ENCODE measurements at regions of chr10 and their contacts with region 1.

Region 1: DNA sequence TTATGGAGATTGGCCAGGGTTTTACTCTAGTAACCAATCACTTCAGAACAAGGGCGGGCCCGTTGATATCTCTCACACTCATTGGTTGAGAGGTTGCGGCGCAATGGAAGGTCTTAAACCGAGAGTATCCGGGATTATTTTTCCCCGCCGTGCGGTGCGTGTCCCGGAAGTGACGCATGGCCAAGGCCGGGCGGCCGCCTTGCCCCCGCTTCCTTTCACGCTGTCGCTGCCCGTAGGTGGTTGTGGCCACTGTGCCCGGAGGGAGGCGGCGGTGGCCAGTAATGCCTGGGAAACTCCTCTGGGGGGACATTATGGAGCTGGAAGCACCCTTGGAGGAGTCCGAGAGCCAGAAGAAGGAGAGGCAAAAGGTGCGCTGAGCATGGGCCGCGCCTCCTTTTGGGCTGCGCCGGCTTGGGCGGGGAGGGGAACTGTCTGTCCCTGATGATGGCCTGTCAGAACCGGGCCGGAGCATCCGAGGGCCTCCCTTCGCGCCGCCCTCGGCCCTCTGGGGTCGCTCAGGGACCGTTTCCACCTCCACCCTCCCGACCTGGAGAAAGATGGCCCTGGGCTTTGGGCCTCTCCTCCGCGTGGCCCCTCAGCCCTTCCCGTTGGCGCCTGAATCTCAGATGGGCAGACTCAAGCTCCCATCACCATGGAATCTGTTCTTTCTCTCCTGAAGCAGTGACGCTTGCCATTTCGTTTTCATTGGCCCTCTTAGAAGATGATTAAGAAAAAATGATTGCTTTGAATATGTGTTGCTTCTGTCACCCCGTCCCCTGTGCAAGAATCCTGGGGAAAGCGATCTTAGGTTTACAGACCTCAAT is at the start of gene DDX50:
- DNase-seq: peak; percentile 94 to 99
- H3K4me3 ChIP-seq: peak within 1 kb of the TSS; percentile 87 to 96
- H3K27ac ChIP-seq: peak within 1 kb of the TSS; percentile 93 to 100
- H3K4me1 ChIP-seq: peaks cover 2 to 16% of the 10 kb centered on the region in 2 donors
- H3K27me3 ChIP-seq: no peaks in the 10 kb centered on the region
- CTCF ChIP-seq: peak in 2 of 3 experiments; percentile 12
- total RNA-seq, gene DDX50: 40.7 TPM

Region 2: GRCh38 chr10:67849331-67850011 is 1051.8 kb before region 1 on chr10:
- intact Hi-C with region 1: loop called (anchors 10 kb)
- DNase-seq: peak; percentile 78 to 98
- H3K4me3 ChIP-seq: peak overlapping the region; percentile 77 to 87
- H3K27ac ChIP-seq: peak overlapping the region; percentile 92 to 94
- H3K4me1 ChIP-seq: peaks cover 3 to 5% of the 10 kb centered on the region in 2 donors
- H3K27me3 ChIP-seq: no peaks in the 10 kb centered on the region
- CTCF ChIP-seq: no peak

Region 3: DNA sequence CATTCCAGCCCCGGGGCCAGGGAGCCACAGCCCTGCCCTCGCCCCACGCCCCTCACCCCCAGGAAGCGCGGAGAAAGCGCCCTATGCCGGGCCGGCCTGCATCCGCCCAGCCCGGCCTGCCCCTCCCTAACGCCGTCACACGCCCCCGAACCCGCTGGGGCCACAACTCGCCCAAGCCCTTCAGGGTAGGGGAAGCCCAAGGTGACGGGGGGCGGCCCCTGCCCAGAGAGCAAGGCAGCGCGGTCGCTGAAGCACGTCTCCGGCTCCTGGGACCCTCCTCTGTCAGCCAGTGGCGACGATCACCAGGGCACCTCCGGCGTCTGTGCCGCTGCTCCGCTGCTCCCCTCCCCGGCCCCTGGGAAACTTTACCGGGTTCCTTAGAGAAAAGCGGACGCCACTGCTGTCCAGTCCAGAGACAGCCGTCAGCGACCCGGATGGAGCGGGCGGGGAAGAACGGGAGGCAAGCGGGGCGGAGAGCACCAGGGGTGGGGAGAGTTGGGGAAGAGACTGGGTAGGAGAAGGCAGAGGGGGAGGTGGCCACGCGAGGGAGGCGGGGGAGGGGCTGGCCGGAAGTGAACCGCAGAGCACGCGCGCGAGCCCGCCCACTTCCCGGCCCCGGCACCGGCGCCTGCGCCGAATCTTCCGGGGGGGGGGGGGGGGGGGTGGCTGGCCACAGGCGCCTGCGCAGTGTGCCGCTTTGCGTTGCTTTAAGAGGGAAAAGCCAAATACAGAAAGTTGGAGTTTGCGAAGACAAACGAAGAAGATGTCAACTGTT is 826.4 kb before region 1 on chr10 and contains the start of gene HERC4:
- intact Hi-C with region 1: loop called (anchors 5 kb)
- DNase-seq: peak; percentile 72 to 97
- H3K4me3 ChIP-seq: peak within 1 kb of the TSS; percentile 87 to 99
- H3K27ac ChIP-seq: peak within 1 kb of the TSS; percentile 99 to 100
- H3K4me1 ChIP-seq: peaks cover 0 to 6% of the 10 kb centered on the region in 2 donors
- H3K27me3 ChIP-seq: no peaks in the 10 kb centered on the region
- CTCF ChIP-seq: no peak
- total RNA-seq, gene HERC4: 15.0 TPM

Region 4: GRCh38 chr10:68406815-68407548 is 494.3 kb before region 1 on chr10 and contains the start of gene RUFY2:
- intact Hi-C with region 1: loop called (anchors 2 kb)
- DNase-seq: peak; percentile 19 to 86
- H3K4me3 ChIP-seq: peak within 1 kb of the TSS; percentile 86 to 89
- H3K27ac ChIP-seq: peak within 1 kb of the TSS; percentile 91 to 92
- H3K4me1 ChIP-seq: no peaks in the 10 kb centered on the region
- H3K27me3 ChIP-seq: no peaks in the 10 kb centered on the region
- CTCF ChIP-seq: peak in 2 of 3 experiments; percentile 52 to 99
- total RNA-seq, gene RUFY2: 7.5 TPM

Region 5: DNA sequence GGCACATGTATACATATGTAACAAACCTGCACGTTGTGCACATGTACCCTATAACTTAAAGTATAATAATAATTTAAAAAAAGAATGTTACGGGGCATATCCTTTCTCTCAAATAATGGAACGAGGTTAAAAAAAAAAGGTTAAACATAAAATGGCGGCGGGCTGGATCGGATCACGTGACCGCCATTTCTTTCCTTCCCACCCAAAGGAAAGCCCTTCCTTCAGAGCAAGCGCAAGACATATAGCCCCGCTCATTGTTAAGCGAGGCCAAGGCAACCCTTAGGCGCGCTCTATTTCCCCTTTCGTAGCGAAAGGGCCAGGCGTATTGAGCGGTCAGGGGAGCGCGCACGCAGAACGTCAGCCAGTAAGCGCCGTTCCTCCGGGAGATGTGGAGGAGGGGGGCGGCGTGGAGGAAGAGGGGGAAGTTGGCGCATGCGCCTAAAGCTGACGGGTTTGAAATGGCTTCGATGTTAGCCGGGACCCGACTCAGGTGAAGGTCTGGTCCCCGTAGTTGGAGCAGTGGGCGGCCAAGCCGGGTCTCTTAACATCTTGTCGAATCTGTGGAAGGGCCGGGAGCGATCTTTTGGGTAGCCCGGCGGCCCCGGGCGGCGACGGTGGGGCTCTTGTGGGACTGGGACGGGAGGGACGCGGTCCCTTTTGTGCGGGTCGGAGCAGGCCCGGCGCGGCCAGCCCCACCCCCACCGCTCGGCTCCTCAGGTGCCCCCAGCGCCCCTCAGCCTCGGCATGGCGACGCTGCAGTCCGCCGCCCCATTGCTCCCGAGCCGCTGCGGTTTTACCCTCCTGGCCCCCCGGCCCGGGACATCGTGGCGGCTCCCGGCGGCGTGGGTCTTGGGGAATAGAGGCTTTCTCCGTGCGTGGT is 180.3 kb before region 1 on chr10 and contains the start of gene CCAR1:
- intact Hi-C with region 1: loop called (anchors 1 kb)
- DNase-seq: peak; percentile 74 to 98
- H3K4me3 ChIP-seq: peak within 1 kb of the TSS; percentile 83 to 91
- H3K27ac ChIP-seq: peak within 1 kb of the TSS; percentile 91 to 97
- H3K4me1 ChIP-seq: peaks cover 0 to 10% of the 10 kb centered on the region in 2 donors
- H3K27me3 ChIP-seq: no peaks in the 10 kb centered on the region
- CTCF ChIP-seq: no peak
- total RNA-seq, gene CCAR1: 9.5 TPM

Region 6: DNA sequence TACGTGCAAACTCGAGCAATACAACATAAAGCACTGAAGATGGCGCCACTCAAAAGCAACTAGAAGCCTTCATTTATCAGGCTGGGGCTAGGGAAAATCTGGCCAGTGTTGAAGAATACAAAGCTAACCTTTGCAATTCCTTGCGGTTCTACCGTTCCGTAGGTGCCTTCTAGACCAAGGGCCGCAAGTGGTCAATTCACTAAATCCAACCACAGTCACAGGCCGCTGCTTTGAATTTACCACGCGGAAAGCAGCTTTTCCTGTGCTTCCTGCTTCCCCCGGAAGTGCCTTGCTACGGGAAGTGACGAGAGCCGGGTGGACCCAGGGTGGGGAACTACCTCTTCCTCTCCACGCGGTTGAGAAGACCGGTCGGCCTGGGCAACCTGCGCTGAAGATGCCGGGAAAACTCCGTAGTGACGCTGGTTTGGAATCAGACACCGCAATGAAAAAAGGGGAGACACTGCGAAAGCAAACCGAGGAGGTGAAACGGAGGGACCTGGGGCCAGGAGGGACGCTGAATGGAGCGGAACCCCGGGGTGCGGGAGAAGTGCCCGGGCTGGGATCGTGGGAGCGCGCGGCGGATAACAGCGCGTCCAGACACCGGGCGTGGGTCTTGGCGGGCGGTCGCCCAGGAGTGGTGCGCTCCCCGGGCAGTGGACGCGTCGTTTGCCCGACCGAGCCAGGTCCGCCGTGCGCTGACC is 54.7 kb after region 1 on chr10 and contains the start of gene DDX21:
- intact Hi-C with region 1: loop called (anchors 5 kb)
- DNase-seq: peak; percentile 51 to 95
- H3K4me3 ChIP-seq: peak within 1 kb of the TSS; percentile 84 to 88
- H3K27ac ChIP-seq: peak within 1 kb of the TSS; percentile 85 to 92
- H3K4me1 ChIP-seq: peaks cover 6 to 17% of the 10 kb centered on the region in 2 donors
- H3K27me3 ChIP-seq: no peaks in the 10 kb centered on the region
- CTCF ChIP-seq: peak; percentile 57 to 72 (median 62)
- total RNA-seq, gene DDX21: 26.5 TPM

Region 7: DNA sequence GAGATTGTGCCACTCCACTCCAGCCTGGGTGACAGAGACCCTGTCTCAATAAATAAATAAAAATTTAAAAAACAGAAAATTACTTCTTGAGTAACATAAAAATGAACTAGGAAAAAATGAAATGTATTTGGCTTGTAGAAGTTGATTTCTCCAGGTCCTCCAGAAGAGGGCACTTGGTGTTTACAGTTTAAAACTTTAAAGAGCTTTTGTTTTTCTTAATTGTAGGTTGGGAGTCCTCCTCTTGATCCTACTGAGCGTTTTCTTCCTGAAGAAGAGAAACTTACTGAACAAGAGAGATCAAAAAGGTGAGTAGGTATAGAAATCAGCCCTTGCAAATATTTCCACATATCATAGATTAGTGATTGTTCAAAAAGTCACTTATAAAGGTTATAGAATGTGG is 103.5 kb after region 1 on chr10:
- intact Hi-C with region 1: no loop called
- DNase-seq: no peak
- H3K4me3 ChIP-seq: no peak overlapping the region
- H3K27ac ChIP-seq: no peak overlapping the region
- H3K4me1 ChIP-seq: peaks cover 0 to 4% of the 10 kb centered on the region in 2 donors
- H3K27me3 ChIP-seq: no peaks in the 10 kb centered on the region
- CTCF ChIP-seq: peak; percentile 34 to 50 (median 34)

Region 8: GRCh38 chr10:69123747-69124562 is 222.6 kb after region 1 on chr10 and contains the start of gene VPS26A:
- intact Hi-C with region 1: loop called (anchors 5 kb)
- DNase-seq: peak; percentile 96 to 99
- H3K4me3 ChIP-seq: peak within 1 kb of the TSS; percentile 92 to 96
- H3K27ac ChIP-seq: peak within 1 kb of the TSS; percentile 98 to 99
- H3K4me1 ChIP-seq: peaks cover 0 to 17% of the 10 kb centered on the region in 2 donors
- H3K27me3 ChIP-seq: no peaks in the 10 kb centered on the region
- CTCF ChIP-seq: peak in 1 of 3 experiments; percentile 37
- total RNA-seq, gene VPS26A: 26.0 TPM

Region 9: GRCh38 chr10:69558559-69558958 is 657.2 kb after region 1 on chr10:
- intact Hi-C with region 1: no loop called
- DNase-seq: no peak
- H3K4me3 ChIP-seq: no peak overlapping the region
- H3K27ac ChIP-seq: no peak overlapping the region
- H3K4me1 ChIP-seq: no peaks in the 10 kb centered on the region
- H3K27me3 ChIP-seq: no peaks in the 10 kb centered on the region
- CTCF ChIP-seq: no peak